AG04450 (cell line): ENCODE measurements at regions of chr2 and their contacts with region 1.

Region 1: DNA sequence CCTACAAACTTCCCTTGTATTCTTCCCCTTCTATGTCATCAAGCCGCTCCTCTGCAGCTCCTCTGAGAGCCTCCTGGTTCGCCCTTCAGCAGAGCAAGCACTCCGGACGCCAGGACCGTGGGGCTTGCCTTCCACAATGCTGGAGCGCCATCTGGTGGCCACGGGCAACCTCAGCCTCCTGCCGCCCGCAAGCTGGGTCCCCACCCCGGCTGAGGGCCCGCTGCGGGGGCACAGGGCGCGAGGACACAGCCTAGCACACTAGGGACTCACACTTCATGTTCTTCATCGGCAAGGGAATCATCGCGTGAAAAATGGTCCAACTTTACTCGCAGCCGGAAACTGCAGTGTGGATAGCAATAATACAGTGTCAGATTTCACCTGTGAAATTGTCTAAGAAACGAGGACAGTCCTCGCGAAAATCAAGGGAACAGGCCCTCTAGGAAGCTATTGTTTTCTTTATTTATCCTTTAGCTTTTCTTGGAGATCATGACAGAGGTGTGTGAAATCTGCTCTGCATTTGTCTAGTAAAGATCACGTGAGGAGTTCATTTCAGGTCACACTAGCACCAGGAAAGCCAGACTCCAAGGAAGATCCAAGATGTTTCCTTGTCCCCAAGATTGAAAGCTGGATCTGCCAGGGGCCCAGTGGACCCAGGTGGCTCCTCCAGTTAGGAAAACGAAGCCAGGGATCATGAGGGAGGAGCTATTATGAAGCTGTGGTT is 5.8 kb downstream of the PRLH start:
- DNase-seq: peak; percentile 85
- H3K4me3 ChIP-seq: no peak overlapping the region
- H3K27ac ChIP-seq: no peak overlapping the region
- H3K27me3 ChIP-seq: peaks cover 3% of the 10 kb centered on the region
- CTCF ChIP-seq: peak; percentile 98

Region 2: GRCh38 chr2:237085248-237086221 is 486.6 kb before region 1 on chr2 and contains the start of gene COPS8:
- CTCF ChIA-PET with region 1: interaction called, 31 read pairs
- POLR2A ChIA-PET with region 1: interaction called, 4 read pairs
- DNase-seq: peak; percentile 74
- H3K4me3 ChIP-seq: peak within 1 kb of the TSS; percentile 87
- H3K27ac ChIP-seq: peak within 1 kb of the TSS; percentile 83
- H3K27me3 ChIP-seq: no peaks in the 10 kb centered on the region
- CTCF ChIP-seq: peak; percentile 33
- polyA plus RNA-seq, gene COPS8: 94.6 and 139 TPM in 2 replicates

Region 3: DNA sequence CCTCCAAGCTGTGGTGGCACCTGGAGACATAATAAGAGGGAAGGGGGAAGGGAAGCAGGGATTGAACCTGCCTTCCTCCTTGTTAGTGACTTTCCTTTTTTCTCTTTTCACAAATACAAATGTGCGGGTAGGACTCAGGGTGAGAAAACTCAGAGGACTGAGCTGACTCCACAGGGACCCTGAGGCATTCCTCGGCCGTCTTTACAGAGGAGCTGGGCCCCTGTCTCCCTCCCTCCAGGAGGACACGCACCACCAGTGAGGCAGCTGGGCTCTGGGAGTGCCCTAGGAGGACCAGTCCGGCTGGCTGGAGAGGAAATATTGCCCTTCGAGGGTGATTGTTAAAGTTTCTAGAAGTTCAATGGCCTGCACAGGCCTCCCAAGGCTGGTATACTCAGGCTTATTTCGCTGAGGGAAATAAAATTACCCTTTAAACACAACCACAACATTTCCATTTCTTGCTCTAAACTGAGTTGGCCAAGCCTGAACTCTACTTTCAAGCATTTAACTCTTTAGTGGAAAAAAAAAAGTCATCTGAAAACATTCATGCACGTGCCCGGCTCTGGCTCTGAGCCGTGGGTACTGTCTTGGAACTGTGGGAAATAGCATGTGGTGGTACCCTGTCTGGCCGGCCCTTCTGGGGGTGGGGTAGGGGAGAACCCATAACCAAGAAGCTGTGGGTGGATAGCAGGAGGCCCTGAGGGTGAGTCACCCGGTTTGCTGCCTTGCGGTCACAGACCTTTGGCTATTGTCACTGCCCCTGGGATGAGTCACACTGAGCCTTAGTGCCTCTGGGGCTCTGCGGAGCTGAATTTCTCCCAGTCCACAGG is 370.5 kb before region 1 on chr2:
- CTCF ChIA-PET with region 1: interaction called, 10 read pairs
- POLR2A ChIA-PET with region 1: no interaction called
- DNase-seq: no peak
- H3K4me3 ChIP-seq: no peak overlapping the region
- H3K27ac ChIP-seq: peak overlapping the region; percentile 89
- H3K27me3 ChIP-seq: no peaks in the 10 kb centered on the region
- CTCF ChIP-seq: no peak

Region 4: DNA sequence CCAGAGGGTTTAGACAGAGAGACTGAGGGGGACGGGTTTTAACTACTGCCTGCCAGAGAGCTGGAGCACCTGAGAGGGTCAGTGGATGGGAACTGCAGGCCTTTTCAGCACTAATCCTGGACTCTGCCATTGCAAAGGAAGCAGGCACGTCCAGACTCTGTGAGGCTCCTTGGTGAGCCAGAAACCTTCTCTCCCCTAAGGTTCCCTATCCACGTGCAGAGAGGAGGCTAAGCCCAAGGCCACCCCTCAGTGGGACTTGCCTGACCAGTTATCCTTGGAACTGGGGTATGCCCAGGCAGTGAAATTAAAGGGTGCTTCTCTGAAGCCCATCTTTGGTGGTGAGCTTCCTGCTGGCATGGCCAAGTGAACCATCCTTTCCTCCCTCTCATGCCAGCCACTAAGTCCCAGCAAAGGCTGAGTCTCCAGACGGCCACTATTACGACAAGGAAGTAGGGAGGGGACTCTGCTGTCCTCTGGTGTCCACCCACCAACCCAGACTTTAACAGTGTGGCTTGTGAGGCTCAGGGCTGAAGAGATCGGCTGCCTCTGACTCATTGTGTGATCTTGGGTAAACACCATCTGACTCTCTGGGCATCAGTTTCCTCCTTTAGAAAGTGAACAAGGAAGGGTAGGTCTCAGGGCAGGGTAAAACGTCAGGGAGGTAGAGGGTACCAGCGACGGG is 89.0 kb before region 1 on chr2:
- CTCF ChIA-PET with region 1: interaction called, 13 read pairs
- POLR2A ChIA-PET with region 1: no interaction called
- DNase-seq: peak; percentile 64
- H3K4me3 ChIP-seq: no peak overlapping the region
- H3K27ac ChIP-seq: peak overlapping the region; percentile 71
- H3K27me3 ChIP-seq: no peaks in the 10 kb centered on the region
- CTCF ChIP-seq: peak; percentile 73

Region 5: DNA sequence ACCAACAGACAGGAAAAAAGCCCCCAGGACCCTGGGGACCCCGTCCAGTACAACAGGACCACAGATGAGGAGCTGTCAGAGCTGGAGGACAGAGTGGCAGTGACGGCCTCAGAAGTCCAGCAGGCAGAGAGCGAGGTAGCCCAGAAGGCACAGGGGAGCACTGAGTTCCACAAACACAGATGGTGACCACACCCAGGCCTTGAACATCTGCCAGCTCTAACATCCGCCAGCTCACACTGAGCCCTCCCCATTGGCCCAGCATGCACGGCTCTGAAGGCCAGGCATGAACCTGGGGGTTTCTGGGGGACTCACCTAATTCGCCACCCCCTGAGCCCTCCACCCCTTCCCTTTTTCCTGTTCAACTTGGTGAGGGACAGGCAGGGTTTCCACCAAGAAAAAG is 31.4 kb before region 1 on chr2:
- CTCF ChIA-PET with region 1: interaction called, 10 read pairs
- POLR2A ChIA-PET with region 1: no interaction called
- DNase-seq: peak; percentile 18
- H3K4me3 ChIP-seq: no peak overlapping the region
- H3K27ac ChIP-seq: no peak overlapping the region
- H3K27me3 ChIP-seq: no peaks in the 10 kb centered on the region
- CTCF ChIP-seq: no peak

Region 6: GRCh38 chr2:237720957-237721356 is 148.8 kb after region 1 on chr2:
- CTCF ChIA-PET with region 1: no interaction called
- POLR2A ChIA-PET with region 1: no interaction called
- DNase-seq: no peak
- H3K4me3 ChIP-seq: no peak overlapping the region
- H3K27ac ChIP-seq: no peak overlapping the region
- H3K27me3 ChIP-seq: no peaks in the 10 kb centered on the region
- CTCF ChIP-seq: no peak

Region 7: GRCh38 chr2:237744613-237745249 is 172.6 kb after region 1 on chr2:
- CTCF ChIA-PET with region 1: interaction called, 35 read pairs
- POLR2A ChIA-PET with region 1: interaction called, 3 read pairs
- DNase-seq: no peak
- H3K4me3 ChIP-seq: no peak overlapping the region
- H3K27ac ChIP-seq: peak overlapping the region; percentile 12
- H3K27me3 ChIP-seq: no peaks in the 10 kb centered on the region
- CTCF ChIP-seq: peak; percentile 99